Activated CD4-positive, alpha-beta T cell treated with anti-CD3 and anti-CD28 coated beads for 36 hours (primary cell): ENCODE measurements at regions of chr6 and their contacts with region 1.

Region 1: DNA sequence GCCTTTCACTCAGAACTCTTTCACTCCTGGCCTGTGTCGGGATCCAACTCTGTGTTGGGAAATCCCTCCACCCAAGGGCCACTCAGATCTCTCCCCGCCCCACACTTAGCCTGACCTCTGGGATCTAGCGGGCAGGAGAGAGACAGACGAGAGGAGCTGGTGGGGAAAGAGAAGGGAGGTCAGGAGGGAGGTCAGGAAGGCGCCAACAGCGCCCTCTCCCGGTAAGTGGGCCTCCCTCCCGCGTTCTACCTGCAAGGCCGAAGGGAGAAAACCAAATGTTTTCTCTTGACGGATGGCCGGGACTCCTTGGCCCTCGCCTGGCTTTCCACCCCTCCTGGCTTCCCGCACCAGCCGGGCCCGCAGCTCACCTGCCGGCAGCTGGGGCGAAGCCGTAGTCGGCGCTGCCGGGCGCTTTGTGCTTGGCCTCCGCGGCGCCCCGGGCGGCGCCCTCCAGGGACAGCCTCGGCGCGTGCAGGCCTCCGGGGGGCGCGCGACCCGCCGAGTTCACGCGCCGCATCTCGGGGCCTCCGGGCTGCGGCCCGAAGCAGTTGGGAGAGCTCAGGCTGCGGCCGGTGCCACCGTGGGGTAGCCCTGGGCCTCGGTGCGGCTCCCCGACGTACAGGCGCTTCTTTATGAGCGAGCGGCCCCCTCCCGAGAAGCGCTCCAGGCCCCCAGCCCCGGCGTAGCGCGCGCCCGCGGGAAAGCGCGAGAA is 38.2 kb downstream of the C6orf132 start:
- DNase-seq: peak; percentile 88
- ATAC-seq: peak; percentile 66
- H3K4me3 Mint-ChIP-seq: peak overlapping the region; percentile 61
- H3K27ac Mint-ChIP-seq: peak overlapping the region; percentile 64
- H3K4me1 Mint-ChIP-seq: peaks cover 27% of the 10 kb centered on the region
- H3K27me3 Mint-ChIP-seq: peaks cover 2% of the 10 kb centered on the region

Region 2: GRCh38 chr6:41787219-41787917 is 316.9 kb before region 1 on chr6 and contains the start of gene TOMM6:
- CTCF ChIA-PET with region 1: interaction called, 8 read pairs
- POLR2A ChIA-PET with region 1: interaction called, 4 read pairs
- intact Hi-C with region 1: loop called in 1 of 2 experiments (anchors 2 kb)
- DNase-seq: peak; percentile 98
- ATAC-seq: peak; percentile 86
- H3K4me3 Mint-ChIP-seq: peak within 1 kb of the TSS; percentile 96
- H3K27ac Mint-ChIP-seq: peak within 1 kb of the TSS; percentile 98
- H3K4me1 Mint-ChIP-seq: peaks cover 19% of the 10 kb centered on the region
- H3K27me3 Mint-ChIP-seq: peaks cover 2% of the 10 kb centered on the region
- total RNA-seq, gene TOMM6: 282 to 345 TPM

Region 3: DNA sequence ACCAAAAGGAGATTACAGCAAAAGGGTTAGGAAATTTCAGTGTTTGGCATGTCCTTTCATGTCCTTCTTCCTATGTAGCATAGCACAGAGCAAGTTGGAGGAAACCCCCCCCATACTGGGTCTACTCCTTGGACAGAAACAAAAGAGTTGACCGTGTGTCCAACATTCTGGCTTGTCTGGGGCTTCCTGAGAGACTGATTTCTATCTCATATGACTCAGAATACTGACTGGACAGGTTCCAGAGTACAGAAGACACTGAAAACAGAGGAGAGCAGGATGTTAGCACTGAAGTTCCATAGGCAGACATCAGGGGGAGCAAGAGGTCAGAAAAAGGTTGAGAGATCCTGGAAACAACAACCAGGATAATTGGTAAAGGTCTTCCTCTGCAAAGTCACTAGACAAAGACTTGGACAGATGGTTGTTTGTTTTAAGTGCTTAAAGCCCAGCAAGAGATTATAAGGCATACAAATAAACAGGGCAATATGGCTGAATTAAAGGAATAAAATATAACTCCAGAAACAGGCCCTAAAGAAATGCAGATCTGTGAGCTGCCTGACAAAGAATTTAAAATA is 257.5 kb before region 1 on chr6:
- CTCF ChIA-PET with region 1: interaction called, 6 read pairs
- POLR2A ChIA-PET with region 1: no interaction called
- intact Hi-C with region 1: loop called in 1 of 2 experiments (anchors 2 kb)
- DNase-seq: peak; percentile 67
- ATAC-seq: peak; percentile 85
- H3K4me3 Mint-ChIP-seq: no peak overlapping the region
- H3K27ac Mint-ChIP-seq: no peak overlapping the region
- H3K4me1 Mint-ChIP-seq: peaks cover 5% of the 10 kb centered on the region
- H3K27me3 Mint-ChIP-seq: no peaks in the 10 kb centered on the region

Region 4: DNA sequence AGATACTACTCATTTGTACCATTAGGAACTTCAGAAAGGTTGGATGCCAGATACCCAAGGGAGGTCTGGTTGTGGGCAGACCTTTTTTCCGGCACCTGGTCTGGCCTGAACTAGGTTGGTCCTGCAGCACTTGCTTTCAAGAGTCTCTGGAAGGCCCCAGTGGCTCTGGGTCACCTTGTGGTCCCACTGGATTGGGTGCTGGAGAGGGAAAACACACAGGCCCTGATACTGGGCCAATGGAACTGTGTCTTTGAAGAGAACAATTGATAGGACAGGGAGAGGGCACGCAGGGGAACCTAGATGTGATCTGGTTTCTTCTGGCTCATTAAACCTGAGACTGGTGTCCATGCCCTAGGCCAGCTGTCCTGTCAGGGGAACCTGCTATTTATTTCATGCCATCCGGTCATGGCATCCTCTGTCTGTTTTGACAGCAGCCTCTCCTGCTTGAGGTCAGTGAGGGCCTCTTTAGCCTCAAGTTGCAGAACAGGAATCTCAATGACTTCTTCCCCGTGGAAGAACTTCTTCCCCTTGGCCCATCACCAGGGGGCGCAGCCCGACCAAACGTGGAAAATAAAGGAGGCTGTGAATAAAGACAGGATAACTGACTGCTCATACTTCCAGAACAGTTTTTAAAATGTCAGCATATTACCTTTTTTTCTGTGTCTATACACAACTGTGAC is 29.0 kb before region 1 on chr6:
- CTCF ChIA-PET with region 1: interaction called, 15 read pairs
- POLR2A ChIA-PET with region 1: no interaction called
- intact Hi-C with region 1: loop called in 1 of 2 experiments (anchors 1 kb)
- DNase-seq: peak; percentile 82
- ATAC-seq: peak; percentile 63
- H3K4me3 Mint-ChIP-seq: no peak overlapping the region
- H3K27ac Mint-ChIP-seq: no peak overlapping the region
- H3K4me1 Mint-ChIP-seq: peaks cover 3% of the 10 kb centered on the region
- H3K27me3 Mint-ChIP-seq: no peaks in the 10 kb centered on the region

Region 5: DNA sequence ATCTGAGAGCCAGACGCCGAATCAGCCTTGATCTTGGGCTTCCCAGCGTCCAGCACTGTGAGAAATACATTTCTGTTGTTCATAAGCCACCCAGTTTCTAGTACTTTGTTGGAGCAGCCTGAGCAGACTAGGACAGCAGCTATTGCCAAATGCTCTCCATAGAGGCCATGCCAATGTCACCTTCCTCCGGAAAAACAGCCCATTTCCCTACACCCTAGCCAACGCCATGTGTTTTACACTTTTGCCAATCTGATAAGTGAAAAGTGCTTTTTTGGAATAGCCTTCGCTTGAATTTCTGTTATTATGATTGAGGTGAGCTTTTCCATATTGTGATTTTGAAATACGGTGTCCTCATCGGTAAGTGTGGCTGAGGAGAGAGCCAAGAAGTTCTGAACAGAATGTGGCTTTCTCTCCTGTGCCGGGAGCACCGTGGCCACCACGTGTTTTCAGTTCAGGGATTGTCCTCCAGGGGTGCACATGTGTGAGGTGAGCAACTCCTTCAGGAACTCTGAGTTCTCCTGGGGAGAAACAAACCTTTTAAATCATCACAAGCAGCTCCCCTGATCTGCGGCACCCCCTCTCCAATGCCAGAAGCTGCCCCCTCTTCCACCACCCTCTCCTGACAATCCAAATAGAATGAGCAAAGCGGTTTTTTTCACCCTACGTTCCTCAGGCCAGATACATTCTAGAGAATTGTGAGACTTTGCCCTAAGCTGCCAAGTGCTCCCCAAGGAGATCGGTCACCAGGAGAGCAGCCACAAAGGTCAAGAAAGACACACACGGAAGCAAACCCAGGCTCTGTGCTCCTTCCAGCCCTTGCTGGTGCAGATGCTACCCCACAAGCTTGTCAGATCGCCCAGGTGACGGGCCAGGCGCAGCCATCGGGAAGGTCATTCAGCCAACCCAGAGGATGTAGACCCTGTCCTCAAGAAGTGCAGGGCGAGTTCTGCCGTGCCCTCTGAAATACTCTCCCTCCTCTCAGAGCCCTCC is 17.9 kb before region 1 on chr6:
- CTCF ChIA-PET with region 1: interaction called, 14 read pairs
- POLR2A ChIA-PET with region 1: interaction called, 3 read pairs
- intact Hi-C with region 1: no loop called
- DNase-seq: no peak
- ATAC-seq: no peak
- H3K4me3 Mint-ChIP-seq: no peak overlapping the region
- H3K27ac Mint-ChIP-seq: peak overlapping the region; percentile 24
- H3K4me1 Mint-ChIP-seq: no peaks in the 10 kb centered on the region
- H3K27me3 Mint-ChIP-seq: no peaks in the 10 kb centered on the region

Region 6: DNA sequence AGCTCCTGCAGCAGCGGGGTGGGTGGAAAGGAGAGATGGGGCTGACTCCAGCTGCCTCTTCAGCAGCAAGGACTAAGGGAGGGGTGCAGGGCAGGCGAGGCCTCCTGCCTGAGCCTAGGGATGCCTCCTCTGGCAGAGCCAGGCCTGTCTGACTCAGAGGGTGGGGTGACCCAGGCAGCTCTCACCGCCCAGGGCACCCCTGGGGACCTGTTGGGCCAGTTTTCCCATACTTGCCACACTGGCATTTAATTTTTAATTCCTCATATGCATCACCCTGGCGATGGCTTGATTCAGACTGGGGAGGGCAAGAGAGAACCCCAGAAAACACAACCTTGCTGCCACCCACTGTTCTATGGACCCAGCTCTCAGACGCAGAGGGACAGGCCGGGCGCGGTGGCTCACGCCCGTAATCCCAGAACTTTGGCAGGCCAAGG is 18.5 kb after region 1 on chr6:
- CTCF ChIA-PET with region 1: interaction called, 13 read pairs
- POLR2A ChIA-PET with region 1: interaction called, 3 read pairs
- intact Hi-C with region 1: no loop called
- DNase-seq: no peak
- ATAC-seq: no peak
- H3K4me3 Mint-ChIP-seq: no peak overlapping the region
- H3K27ac Mint-ChIP-seq: no peak overlapping the region
- H3K4me1 Mint-ChIP-seq: no peaks in the 10 kb centered on the region
- H3K27me3 Mint-ChIP-seq: no peaks in the 10 kb centered on the region